Heart left ventricle (tissue), 16 donors: ENCODE measurements at regions of chr1 and their contacts with region 1.

Region 1: GRCh38 chr1:51519048-51519864 is at the start of gene EPS15:
- DNase-seq: peak; percentile 91 to 94 (median 93)
- ATAC-seq: peak; percentile 68 to 92 (median 86)
- H3K4me3 ChIP-seq: peak within 1 kb of the TSS; percentile 75 to 96 (median 83)
- H3K27ac ChIP-seq: peak within 1 kb of the TSS; percentile 77 to 97 (median 94)
- H3K4me1 ChIP-seq: peaks cover 5 to 56% (median 29%) of the 10 kb centered on the region in 12 donors
- H3K27me3 ChIP-seq: no peaks in the 10 kb centered on the region
- CTCF ChIP-seq: no peak
- POLR2A ChIP-seq: no peak
- total RNA-seq, gene EPS15: 48.4 to 80.6 (median 72.8) TPM

Region 2: GRCh38 chr1:50959913-50960844 is 559.1 kb before region 1 on chr1 and contains the start of gene FAF1:
- intact Hi-C with region 1: loop called in 1 of 10 experiments (anchors 10 kb)
- DNase-seq: peak; percentile 96 to 98 (median 97)
- ATAC-seq: peak; percentile 96 to 99 (median 99)
- H3K4me3 ChIP-seq: peak within 1 kb of the TSS; percentile 44 to 89 (median 75)
- H3K27ac ChIP-seq: peak within 1 kb of the TSS; percentile 51 to 93 (median 86)
- H3K4me1 ChIP-seq: peaks cover 0 to 37% (median 17%) of the 10 kb centered on the region in 12 donors
- H3K27me3 ChIP-seq: no peaks in the 10 kb centered on the region
- CTCF ChIP-seq: peak in 6 of 12 donors; percentile 13 to 35 (median 20)
- POLR2A ChIP-seq: peak; percentile 37 to 88
- total RNA-seq, gene FAF1: 46.6 to 112 (median 83.6) TPM

Region 3: GRCh38 chr1:51235673-51236530 is 283.4 kb before region 1 on chr1 and contains the start of gene RNF11:
- intact Hi-C with region 1: loop called in 1 of 10 experiments (anchors 10 kb)
- DNase-seq: peak; percentile 94 to 96 (median 95)
- ATAC-seq: peak; percentile 93 to 99 (median 98)
- H3K4me3 ChIP-seq: peak within 1 kb of the TSS; percentile 76 to 99 (median 94)
- H3K27ac ChIP-seq: peak within 1 kb of the TSS; percentile 90 to 98 (median 96)
- H3K4me1 ChIP-seq: peaks cover 0 to 44% (median 41%) of the 10 kb centered on the region in 12 donors
- H3K27me3 ChIP-seq: no peaks in the 10 kb centered on the region
- CTCF ChIP-seq: peak in 1 of 12 donors; percentile 9
- POLR2A ChIP-seq: peak; percentile 70 to 96
- total RNA-seq, gene RNF11: 77.3 to 139 (median 107) TPM

Region 4: DNA sequence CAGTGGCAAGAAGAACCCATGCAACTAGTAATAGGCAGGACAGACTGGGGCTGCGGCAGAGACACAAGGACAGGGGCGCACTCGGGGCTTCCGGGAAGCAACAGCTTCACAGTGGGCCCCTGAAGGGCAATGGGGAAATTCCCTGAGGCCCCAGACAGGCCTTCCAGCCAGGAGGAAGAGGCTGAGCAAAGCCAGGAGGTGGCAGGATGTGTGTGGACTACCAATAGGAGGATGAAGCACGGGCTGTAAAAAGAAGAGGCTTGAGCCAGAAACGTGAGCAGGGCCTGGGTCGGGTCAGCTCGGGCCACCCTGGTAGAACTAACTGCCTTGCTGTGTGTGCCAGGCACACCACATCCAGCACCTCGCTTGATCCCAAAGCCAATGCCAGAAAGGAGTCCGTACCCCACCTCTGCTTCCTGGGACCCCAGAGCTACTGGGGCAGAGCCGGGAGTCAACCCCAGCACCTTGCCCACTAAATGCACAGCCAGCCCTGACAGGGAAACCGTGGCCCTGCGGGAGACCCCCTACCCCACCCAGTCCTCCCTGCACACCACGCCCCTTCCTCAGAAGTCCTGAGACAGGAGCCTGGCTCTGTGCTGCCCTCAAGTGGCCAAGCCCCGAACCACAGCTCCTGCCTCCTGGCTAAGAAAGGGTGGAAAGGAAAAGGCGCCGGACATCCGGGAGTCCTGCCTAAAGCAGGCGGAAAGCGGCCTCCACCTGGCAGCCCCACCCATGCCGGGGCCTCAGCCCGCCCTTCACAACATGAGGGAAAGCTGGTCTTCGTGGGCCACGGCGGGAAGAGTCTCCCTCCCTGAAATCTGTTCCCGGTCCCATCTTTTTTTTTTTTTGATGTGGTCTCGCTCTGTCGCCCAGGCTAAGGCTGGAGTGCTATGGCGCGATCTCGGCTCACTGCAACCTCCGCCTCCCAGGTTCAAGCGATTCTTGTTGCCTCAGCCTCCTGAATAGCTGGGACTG is 222.6 kb before region 1 on chr1:
- intact Hi-C with region 1: no loop called
- DNase-seq: peak; percentile 81 to 90 (median 84)
- ATAC-seq: peak; percentile 65 to 87 (median 84)
- H3K4me3 ChIP-seq: peak overlapping the region in 11 of 12 donors; percentile 19 to 74 (median 51)
- H3K27ac ChIP-seq: peak overlapping the region in 4 of 12 donors; percentile 1 to 27 (median 8)
- H3K4me1 ChIP-seq: peaks cover 0 to 16% (median 11%) of the 10 kb centered on the region in 12 donors
- H3K27me3 ChIP-seq: no peaks in the 10 kb centered on the region
- CTCF ChIP-seq: peak; percentile 93 to 99 (median 97)
- POLR2A ChIP-seq: no peak

Region 5: DNA sequence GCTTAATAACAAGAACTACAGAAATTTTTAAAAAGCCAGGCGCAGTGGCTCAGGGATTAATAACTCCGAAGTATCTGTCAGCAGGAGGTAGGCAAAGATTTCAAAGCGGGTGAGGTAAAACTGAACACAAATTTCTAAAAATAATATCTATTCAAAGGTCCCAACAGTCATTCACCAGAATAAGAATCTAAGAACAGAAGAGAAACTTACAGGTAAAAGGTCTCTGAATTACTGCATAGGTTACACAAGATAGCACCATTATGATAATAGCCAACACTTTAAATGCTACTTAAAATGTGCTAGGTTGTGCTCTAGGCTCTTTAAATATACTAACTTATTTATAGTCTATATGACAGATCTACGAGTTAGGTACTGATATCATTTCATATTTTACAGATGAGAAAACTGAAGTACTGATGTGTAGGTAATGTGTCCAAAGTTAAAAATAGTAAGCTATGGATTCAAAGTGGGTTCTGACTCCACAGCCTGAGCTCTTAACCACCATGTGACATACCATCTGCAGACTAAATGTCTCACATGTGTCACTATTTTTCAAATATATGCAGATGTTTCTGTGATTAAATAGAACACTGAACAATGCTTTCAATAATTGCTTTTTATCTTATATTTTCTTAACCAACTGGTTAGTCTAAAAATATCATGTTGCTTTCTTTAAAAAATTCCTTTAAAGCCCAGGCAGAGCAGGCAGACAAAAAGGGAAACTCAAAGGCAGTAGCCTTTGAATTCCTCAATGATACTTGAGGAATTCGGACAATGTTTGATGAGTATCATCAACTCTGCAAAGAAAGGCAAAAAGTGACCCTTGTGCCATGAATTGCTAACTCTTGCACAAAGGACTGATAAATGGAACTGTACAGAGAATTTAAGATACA is 108.4 kb before region 1 on chr1:
- intact Hi-C with region 1: loop called in 3 of 10 experiments (anchors 5 to 10 kb)
- DNase-seq: no peak
- ATAC-seq: peak in 2 of 4 donors; percentile 36 to 57
- H3K4me3 ChIP-seq: no peak overlapping the region
- H3K27ac ChIP-seq: peak overlapping the region in 10 of 12 donors; percentile 5 to 58 (median 26)
- H3K4me1 ChIP-seq: peaks cover 0 to 28% (median 5%) of the 10 kb centered on the region in 12 donors
- H3K27me3 ChIP-seq: no peaks in the 10 kb centered on the region
- CTCF ChIP-seq: no peak
- POLR2A ChIP-seq: no peak

Region 6: DNA sequence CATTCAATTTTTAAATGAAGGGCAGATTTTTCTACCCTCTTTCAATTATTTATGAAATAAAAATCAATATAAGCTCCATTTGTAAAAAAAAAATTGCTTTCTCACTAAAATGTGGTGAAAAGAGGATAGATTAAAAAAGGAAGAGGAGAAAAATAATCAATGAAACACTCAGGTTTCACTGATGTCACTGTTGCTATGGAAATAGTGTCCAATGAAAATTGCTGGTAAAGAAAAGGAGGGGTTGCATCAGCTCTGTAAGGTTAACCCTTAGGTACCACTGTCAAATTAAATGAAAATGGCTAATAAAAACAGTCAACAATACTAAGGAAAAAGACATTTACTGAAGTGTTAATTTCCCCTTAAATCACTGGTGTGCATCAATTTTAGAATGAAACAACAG is 97.3 kb before region 1 on chr1:
- intact Hi-C with region 1: loop called in 9 of 10 experiments (anchors 2 to 10 kb)
- DNase-seq: no peak
- ATAC-seq: peak; percentile 59 to 80 (median 74)
- H3K4me3 ChIP-seq: peak overlapping the region in 8 of 12 donors; percentile 15 to 49 (median 36)
- H3K27ac ChIP-seq: peak overlapping the region in 11 of 12 donors; percentile 34 to 84 (median 66)
- H3K4me1 ChIP-seq: peaks cover 0 to 75% (median 29%) of the 10 kb centered on the region in 12 donors
- H3K27me3 ChIP-seq: no peaks in the 10 kb centered on the region
- CTCF ChIP-seq: no peak
- POLR2A ChIP-seq: no peak

Region 7: GRCh38 chr1:51472359-51472758 is 46.9 kb before region 1 on chr1:
- intact Hi-C with region 1: loop called in 1 of 10 experiments (anchors 5 kb)
- DNase-seq: peak in 2 of 5 donors; percentile 35 to 39
- ATAC-seq: peak; percentile 69 to 85 (median 78)
- H3K4me3 ChIP-seq: no peak overlapping the region
- H3K27ac ChIP-seq: peak overlapping the region in 4 of 12 donors; percentile 1 to 72 (median 40)
- H3K4me1 ChIP-seq: peaks cover 8 to 29% (median 24%) of the 10 kb centered on the region in 12 donors
- H3K27me3 ChIP-seq: no peaks in the 10 kb centered on the region
- CTCF ChIP-seq: no peak
- POLR2A ChIP-seq: no peak

Region 8: DNA sequence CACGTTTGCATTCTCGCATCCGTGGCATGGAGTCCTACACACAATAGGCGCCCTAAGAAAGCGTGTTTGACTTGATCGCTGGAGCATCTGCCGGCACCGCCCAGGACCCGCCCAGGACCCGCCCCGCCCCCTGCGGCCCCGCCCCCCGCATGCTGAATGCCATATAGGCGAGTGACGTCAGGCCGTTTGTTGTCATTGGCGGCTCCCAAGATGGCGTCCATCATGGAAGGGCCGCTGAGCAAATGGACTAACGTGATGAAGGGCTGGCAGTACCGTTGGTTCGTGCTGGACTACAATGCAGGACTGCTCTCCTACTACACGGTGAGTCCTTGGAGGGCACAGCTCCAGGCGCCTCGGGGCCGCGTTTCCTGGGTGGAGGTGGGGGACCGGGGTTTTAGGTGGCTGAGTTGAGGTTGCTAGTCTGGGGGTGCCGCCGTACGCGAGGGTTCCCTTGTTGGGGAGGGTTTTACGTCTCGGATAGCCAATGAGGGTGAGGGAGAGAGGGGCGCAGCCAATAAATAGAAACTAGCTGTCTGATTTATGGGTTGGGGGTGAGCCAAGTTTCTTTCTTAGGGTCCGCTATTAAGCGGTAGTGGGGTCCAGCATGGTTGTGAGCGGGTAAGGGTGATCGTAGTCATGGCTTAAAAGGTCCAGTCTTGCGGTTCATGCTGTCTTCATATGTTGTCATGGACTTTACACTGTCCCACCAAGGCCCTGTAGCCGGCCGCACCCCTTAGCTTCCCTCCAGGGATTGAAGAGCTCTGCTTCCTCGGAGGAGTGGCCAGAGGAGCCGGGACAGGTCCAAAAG is 97.8 kb after region 1 on chr1 and contains the start of gene OSBPL9:
- intact Hi-C with region 1: loop called in 3 of 10 experiments (anchors 5 to 10 kb)
- DNase-seq: peak; percentile 90 to 94 (median 92)
- ATAC-seq: peak; percentile 89 to 96 (median 95)
- H3K4me3 ChIP-seq: peak within 1 kb of the TSS; percentile 55 to 95 (median 84)
- H3K27ac ChIP-seq: peak within 1 kb of the TSS; percentile 51 to 93 (median 87)
- H3K4me1 ChIP-seq: peaks cover 8 to 60% (median 44%) of the 10 kb centered on the region in 12 donors
- H3K27me3 ChIP-seq: no peaks in the 10 kb centered on the region
- CTCF ChIP-seq: no peak
- POLR2A ChIP-seq: peak in 1 of 2 donors; percentile 75
- total RNA-seq, gene OSBPL9: 44.5 to 69.5 (median 53.5) TPM